ENCODE measurements at regions of chr18 and their contacts with region 1.

Region 1: DNA sequence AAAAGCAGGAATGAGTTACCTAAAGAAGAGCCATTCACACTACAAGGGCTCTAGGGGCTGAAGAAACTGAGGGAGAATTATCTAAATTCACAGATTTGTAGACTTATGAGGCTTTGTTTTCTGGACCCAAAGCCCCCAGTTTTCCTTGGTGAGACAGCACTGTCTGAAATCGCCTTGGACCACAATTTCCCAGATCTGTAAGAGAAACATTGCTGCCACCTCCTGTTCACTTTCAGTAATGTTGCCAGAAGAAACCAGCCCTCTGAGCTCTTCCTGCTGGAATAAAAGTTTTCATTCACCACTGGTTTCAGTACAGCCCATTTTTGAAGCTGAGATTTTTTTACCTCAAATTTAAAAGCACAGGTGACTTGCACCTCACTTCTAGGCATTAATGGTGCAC is 169.2 kb downstream of the CDH20 start:
- DNase-seq: peak; percentile 61
- ATAC-seq: peak; percentile 88
- H3K4me3 ChIP-seq: no peak overlapping the region
- H3K27ac ChIP-seq: no peak overlapping the region
- H3K4me1 ChIP-seq: no peaks in the 10 kb centered on the region
- H3K27me3 ChIP-seq: peaks cover 7% of the 10 kb centered on the region
- CTCF ChIP-seq: peak; percentile 74
- POLR2A ChIP-seq: no peak
- RAD21 ChIP-seq: peak; percentile 75

Region 2: DNA sequence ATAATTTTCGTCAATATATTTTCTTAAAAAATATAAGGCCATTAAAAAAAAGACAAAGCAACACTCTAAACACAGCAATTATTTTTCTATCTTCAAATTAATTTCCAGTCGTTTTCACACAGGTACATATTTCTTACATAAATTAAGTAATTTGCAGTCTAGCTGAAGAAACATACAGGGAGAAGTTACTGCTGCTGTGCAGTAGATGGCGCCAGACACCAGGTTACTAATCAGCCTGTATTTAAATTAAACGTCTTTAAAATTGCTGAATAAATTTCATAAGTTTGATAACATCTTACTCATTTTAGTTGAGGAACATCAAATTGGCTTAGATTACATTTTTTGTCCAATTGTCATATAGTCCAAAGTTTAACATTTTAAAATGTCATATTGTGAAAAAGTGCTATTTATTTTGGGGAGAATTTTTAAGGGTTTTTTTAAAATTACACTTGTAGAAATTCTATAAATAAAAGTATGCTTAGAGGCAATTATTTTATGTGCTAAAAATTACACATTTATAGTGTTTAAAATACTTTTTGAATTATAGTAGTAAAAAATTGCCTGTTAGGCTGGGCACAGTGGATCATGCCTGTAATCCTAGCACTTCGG is 1514.3 kb before region 1 on chr18:
- CTCF ChIA-PET with region 1: interaction called, 4 read pairs
- POLR2A ChIA-PET with region 1: no interaction called
- dilution Hi-C with region 1: no loop called
- in situ Hi-C with region 1: no loop called
- intact Hi-C with region 1: loop called (anchors 2 kb)
- DNase-seq: peak; percentile 74
- ATAC-seq: peak; percentile 77
- H3K4me3 ChIP-seq: no peak overlapping the region
- H3K27ac ChIP-seq: no peak overlapping the region
- H3K4me1 ChIP-seq: no peaks in the 10 kb centered on the region
- H3K27me3 ChIP-seq: peaks cover 19% of the 10 kb centered on the region
- CTCF ChIP-seq: peak; percentile 98
- POLR2A ChIP-seq: no peak
- RAD21 ChIP-seq: peak; percentile 96

Region 3: GRCh38 chr18:60684843-60685513 is 817.5 kb before region 1 on chr18:
- CTCF ChIA-PET with region 1: no interaction called
- POLR2A ChIA-PET with region 1: no interaction called
- dilution Hi-C with region 1: no loop called
- in situ Hi-C with region 1: loop called (anchors 25 kb)
- intact Hi-C with region 1: loop called (anchors 1 kb)
- DNase-seq: peak; percentile 17
- ATAC-seq: no peak
- H3K4me3 ChIP-seq: no peak overlapping the region
- H3K27ac ChIP-seq: no peak overlapping the region
- H3K4me1 ChIP-seq: no peaks in the 10 kb centered on the region
- H3K27me3 ChIP-seq: no peaks in the 10 kb centered on the region
- CTCF ChIP-seq: peak; percentile 46
- POLR2A ChIP-seq: no peak
- RAD21 ChIP-seq: peak; percentile 43

Region 4: GRCh38 chr18:60809937-60810336 is 692.5 kb before region 1 on chr18:
- CTCF ChIA-PET with region 1: no interaction called
- POLR2A ChIA-PET with region 1: no interaction called
- dilution Hi-C with region 1: no loop called
- in situ Hi-C with region 1: no loop called
- intact Hi-C with region 1: loop called (anchors 5 kb)
- DNase-seq: no peak
- ATAC-seq: no peak
- H3K4me3 ChIP-seq: no peak overlapping the region
- H3K27ac ChIP-seq: no peak overlapping the region
- H3K4me1 ChIP-seq: no peaks in the 10 kb centered on the region
- H3K27me3 ChIP-seq: no peaks in the 10 kb centered on the region
- CTCF ChIP-seq: no peak
- POLR2A ChIP-seq: no peak
- RAD21 ChIP-seq: no peak

Region 5: GRCh38 chr18:61085761-61086160 is 416.7 kb before region 1 on chr18:
- CTCF ChIA-PET with region 1: interaction called, 3 read pairs
- POLR2A ChIA-PET with region 1: no interaction called
- dilution Hi-C with region 1: no loop called
- in situ Hi-C with region 1: no loop called
- intact Hi-C with region 1: loop called (anchors 2 kb)
- DNase-seq: no peak
- ATAC-seq: no peak
- H3K4me3 ChIP-seq: no peak overlapping the region
- H3K27ac ChIP-seq: no peak overlapping the region
- H3K4me1 ChIP-seq: no peaks in the 10 kb centered on the region
- H3K27me3 ChIP-seq: no peaks in the 10 kb centered on the region
- CTCF ChIP-seq: no peak
- POLR2A ChIP-seq: no peak
- RAD21 ChIP-seq: no peak

Region 6: GRCh38 chr18:61173554-61173953 is 328.9 kb before region 1 on chr18:
- CTCF ChIA-PET with region 1: no interaction called
- POLR2A ChIA-PET with region 1: no interaction called
- dilution Hi-C with region 1: no loop called
- in situ Hi-C with region 1: no loop called
- intact Hi-C with region 1: no loop called
- DNase-seq: no peak
- ATAC-seq: no peak
- H3K4me3 ChIP-seq: no peak overlapping the region
- H3K27ac ChIP-seq: no peak overlapping the region
- H3K4me1 ChIP-seq: no peaks in the 10 kb centered on the region
- H3K27me3 ChIP-seq: no peaks in the 10 kb centered on the region
- CTCF ChIP-seq: no peak
- POLR2A ChIP-seq: no peak
- RAD21 ChIP-seq: no peak

Region 7: DNA sequence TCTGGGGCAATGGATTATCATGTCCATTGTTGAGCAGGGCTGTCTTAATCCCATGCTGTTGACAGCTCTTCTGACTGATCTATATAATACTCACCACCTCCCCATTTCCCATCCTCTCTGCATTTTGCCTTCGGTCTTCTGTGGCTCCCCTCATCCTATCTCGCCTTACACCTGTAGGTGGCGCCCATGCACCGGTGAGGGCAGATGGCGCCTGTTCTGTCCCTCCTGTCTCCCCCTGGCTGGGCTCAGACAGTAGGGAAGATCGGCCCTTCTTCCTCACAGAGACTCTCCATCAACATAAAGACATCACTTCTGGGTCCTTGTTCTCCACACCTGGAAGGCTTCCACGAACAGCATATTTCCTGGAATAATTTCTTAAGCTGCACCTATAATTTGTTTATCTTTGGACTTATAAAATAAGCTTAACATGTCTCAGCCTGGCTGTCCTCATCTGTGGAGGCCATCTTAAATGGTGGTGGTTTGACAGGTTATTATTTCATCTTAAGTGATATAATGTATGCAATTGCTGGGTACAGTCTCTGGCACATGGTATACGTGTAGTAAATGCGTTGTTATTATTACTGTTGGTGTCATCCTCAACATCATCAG is 180.1 kb before region 1 on chr18:
- CTCF ChIA-PET with region 1: interaction called, 12 read pairs
- POLR2A ChIA-PET with region 1: no interaction called
- dilution Hi-C with region 1: no loop called
- in situ Hi-C with region 1: loop called (anchors 5 kb)
- intact Hi-C with region 1: loop called (anchors 1 kb)
- DNase-seq: peak; percentile 33
- ATAC-seq: peak; percentile 96
- H3K4me3 ChIP-seq: no peak overlapping the region
- H3K27ac ChIP-seq: no peak overlapping the region
- H3K4me1 ChIP-seq: no peaks in the 10 kb centered on the region
- H3K27me3 ChIP-seq: no peaks in the 10 kb centered on the region
- CTCF ChIP-seq: peak; percentile 91
- POLR2A ChIP-seq: no peak
- RAD21 ChIP-seq: peak; percentile 91

Region 8: DNA sequence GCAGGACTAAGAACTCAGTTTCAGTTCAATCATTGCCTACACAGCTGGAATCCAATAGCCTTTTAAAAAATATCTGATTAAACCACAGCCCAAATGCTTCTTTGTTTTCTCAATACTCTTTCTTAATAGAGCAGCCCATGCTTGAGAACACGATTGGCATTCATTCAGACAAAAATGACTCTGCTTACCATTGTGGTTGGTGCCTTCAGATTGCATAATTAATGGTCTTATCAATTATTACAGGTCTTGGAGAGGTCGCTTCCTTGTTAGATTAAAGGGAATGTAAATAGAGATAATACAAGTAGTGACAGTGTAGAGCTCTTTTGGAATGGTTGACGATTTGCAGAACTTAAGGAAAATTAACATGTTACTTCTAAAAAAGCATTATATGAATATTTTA is 283.1 kb after region 1 on chr18:
- CTCF ChIA-PET with region 1: no interaction called
- POLR2A ChIA-PET with region 1: no interaction called
- dilution Hi-C with region 1: no loop called
- in situ Hi-C with region 1: no loop called
- intact Hi-C with region 1: no loop called
- DNase-seq: no peak
- ATAC-seq: no peak
- H3K4me3 ChIP-seq: no peak overlapping the region
- H3K27ac ChIP-seq: no peak overlapping the region
- H3K4me1 ChIP-seq: no peaks in the 10 kb centered on the region
- H3K27me3 ChIP-seq: no peaks in the 10 kb centered on the region
- CTCF ChIP-seq: no peak
- POLR2A ChIP-seq: no peak
- RAD21 ChIP-seq: no peak